ENCODE measurements at regions of chr7 and their contacts with region 1.

Region 1: DNA sequence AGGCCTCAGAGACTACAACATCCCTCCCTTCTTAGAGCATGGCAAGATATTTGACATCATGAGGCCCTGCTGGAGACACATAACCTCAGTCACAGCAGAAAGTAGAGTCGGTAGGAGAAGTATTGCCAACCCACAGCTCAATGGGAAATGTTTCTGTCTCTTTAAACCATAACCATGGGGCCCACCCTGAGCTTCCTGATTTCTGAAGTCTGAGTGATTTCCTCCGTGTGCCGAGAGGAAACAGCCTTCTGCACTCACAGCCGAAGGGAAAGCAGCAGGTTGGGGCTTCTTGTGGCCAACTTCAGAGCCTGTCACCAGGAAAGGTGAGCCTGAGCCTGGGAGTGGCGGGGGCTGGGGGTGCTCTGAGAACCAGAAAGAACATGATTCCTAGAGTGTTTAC is at the start of gene GIMAP1:
- DNase-seq: no peak
- ATAC-seq: peak; percentile 76
- H3K4me3 Mint-ChIP-seq: peak within 1 kb of the TSS; percentile 84
- H3K27ac Mint-ChIP-seq: peak within 1 kb of the TSS; percentile 87
- H3K4me1 Mint-ChIP-seq: peaks cover 43% of the 10 kb centered on the region
- H3K27me3 Mint-ChIP-seq: no peaks in the 10 kb centered on the region
- total RNA-seq, gene GIMAP1: 42.1 to 43.0 TPM

Region 2: DNA sequence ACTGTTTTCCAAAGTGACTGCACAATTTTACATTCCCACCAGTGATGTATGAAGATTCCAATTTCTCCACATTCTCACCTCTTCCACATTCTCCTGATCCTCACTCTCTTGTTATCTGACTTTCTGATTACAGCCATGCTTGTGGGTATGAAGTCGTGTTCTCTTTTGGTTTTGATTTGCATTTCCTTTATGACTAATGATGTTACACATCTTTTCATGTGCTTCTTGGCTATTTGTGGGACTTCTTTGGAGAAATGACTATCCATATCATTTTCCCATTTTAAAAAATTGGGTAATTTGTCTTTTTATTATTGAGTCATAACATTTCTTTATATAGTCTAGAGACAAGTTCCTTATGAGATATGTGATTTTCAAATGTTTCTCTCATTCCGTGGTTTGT is 276.4 kb before region 1 on chr7:
- POLR2A ChIA-PET with region 1: no interaction called
- DNase-seq: no peak
- ATAC-seq: peak; percentile 65
- H3K4me3 Mint-ChIP-seq: peak overlapping the region; percentile 11
- H3K27ac Mint-ChIP-seq: no peak overlapping the region
- H3K4me1 Mint-ChIP-seq: peaks cover 27% of the 10 kb centered on the region
- H3K27me3 Mint-ChIP-seq: no peaks in the 10 kb centered on the region

Region 3: GRCh38 chr7:150668472-150668911 is 47.9 kb before region 1 on chr7:
- POLR2A ChIA-PET with region 1: interaction called, 14 read pairs
- DNase-seq: peak; percentile 48
- ATAC-seq: peak; percentile 75
- H3K4me3 Mint-ChIP-seq: peak overlapping the region; percentile 75
- H3K27ac Mint-ChIP-seq: peak overlapping the region; percentile 89
- H3K4me1 Mint-ChIP-seq: peaks cover 70% of the 10 kb centered on the region
- H3K27me3 Mint-ChIP-seq: no peaks in the 10 kb centered on the region

Region 4: DNA sequence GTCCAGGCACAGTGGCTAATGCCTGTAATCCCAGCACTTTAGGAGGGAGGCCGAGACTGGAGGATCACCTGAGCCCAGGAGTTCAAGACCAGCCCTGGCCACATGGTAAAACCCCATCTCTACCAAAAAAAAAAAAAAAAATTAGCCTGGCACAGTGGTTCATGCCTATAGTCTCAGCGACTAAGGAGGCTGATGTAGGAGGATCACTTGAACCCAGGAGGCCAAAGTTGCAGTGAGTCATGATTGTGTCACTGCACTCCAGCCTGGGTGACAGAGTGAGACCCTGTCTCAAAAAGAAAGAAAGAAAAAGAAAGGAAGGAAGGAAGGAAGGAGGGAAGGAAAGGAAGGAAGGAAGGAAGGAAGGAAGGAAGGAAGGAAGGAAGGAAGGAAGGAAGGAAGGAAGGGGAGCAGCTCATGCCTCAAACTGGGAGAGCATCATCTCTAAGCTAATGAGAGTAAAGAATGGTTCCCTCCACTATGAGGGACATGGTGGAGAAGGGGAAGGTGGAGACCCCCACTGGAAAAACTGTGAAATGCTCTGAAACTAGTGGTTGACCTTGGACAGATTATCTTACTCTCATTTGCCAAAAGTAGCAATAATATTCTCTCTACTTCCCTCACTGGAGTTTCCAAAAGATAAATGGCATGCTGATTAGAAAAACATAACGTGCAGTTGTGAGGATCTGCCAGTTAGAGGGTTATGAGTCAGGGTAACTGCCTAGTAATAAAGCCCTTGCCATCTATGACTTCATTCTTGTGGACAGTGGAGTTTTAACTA is 37.6 kb after region 1 on chr7:
- POLR2A ChIA-PET with region 1: interaction called, 28 read pairs
- DNase-seq: no peak
- ATAC-seq: peak; percentile 23
- H3K4me3 Mint-ChIP-seq: peak overlapping the region; percentile 55
- H3K27ac Mint-ChIP-seq: peak overlapping the region; percentile 92
- H3K4me1 Mint-ChIP-seq: peaks cover 55% of the 10 kb centered on the region
- H3K27me3 Mint-ChIP-seq: peaks cover 2% of the 10 kb centered on the region

Region 5: GRCh38 chr7:150830937-150831336 is 114.6 kb after region 1 on chr7:
- POLR2A ChIA-PET with region 1: no interaction called
- DNase-seq: no peak
- ATAC-seq: no peak
- H3K4me3 Mint-ChIP-seq: no peak overlapping the region
- H3K27ac Mint-ChIP-seq: no peak overlapping the region
- H3K4me1 Mint-ChIP-seq: no peaks in the 10 kb centered on the region
- H3K27me3 Mint-ChIP-seq: peaks cover 46% of the 10 kb centered on the region

Measured in activated naive CD8-positive, alpha-beta T cell treated with anti-CD3 and anti-CD28 coated beads, Interleukin-2, amount 10 ng/mL, durations not matched to agents 7 days and 5 days (primary cell).